AG04450 (cell line): ENCODE measurements at regions of chr6 and their contacts with region 1.

Region 1: DNA sequence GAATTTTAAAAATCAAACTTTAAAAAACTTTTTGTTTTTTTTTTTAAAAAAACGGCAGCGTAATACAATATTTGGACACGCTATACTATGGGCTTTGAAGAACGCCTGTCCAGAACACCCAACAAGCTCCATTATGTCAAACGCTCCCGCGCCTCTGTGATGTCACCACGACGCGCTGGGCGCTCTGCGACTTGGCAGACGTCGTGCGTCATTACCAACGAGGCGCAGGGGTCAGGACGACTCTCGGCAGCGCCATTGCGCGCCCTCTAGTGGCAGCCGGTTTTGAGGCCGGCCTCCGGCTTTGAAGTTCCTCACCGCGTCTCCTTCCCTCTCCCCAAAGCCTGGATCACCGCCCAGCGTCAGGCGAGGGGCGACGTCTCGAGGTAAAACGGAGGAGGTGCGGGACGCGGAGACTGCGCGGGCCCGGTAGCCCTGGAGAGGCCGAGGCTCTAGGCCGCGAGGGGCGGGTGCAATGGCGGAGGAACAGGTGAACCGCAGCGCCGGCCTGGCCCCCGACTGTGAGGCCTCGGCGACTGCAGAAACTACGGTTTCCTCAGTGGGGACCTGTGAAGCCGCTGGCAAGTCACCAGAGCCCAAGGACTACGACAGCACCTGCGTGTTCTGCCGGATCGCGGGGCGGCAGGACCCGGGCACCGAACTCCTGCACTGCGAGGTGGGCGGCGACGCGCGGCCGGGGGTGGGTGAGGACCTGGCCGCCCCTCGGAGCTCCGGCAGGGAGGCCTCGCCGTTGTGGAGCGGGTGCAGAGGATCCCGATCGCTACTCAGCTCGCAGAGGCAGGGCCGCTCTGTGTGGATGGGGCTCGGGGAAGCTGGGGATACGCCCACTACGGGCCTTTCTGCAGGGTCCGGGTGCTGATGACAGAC is at the start of gene HINT3:
- DNase-seq: peak; percentile 91
- H3K4me3 ChIP-seq: peak within 1 kb of the TSS; percentile 91
- H3K27ac ChIP-seq: peak within 1 kb of the TSS; percentile 78
- H3K27me3 ChIP-seq: no peaks in the 10 kb centered on the region
- CTCF ChIP-seq: peak; percentile 96
- polyA plus RNA-seq, gene HINT3: 4.0 and 4.5 TPM in 2 replicates

Region 2: DNA sequence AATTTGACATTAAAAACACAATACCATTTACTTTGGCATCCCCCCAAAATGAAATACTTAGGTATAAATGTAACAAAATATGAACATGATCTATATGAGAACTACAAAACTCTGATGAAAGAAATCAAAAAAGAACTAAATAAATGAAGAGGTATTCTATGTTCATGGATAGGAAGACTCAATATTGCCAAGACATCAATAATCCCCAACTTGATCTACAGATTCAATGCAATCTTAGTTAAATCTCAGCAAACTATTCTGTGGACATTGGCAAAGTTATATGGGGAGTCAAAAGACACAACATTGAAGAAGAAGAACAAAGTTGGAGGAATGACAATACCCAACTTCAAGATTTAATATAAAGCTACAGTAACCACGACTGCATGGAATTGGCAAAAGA is 352.5 kb before region 1 on chr6:
- CTCF ChIA-PET with region 1: no interaction called
- POLR2A ChIA-PET with region 1: no interaction called
- DNase-seq: no peak
- H3K4me3 ChIP-seq: no peak overlapping the region
- H3K27ac ChIP-seq: no peak overlapping the region
- H3K27me3 ChIP-seq: no peaks in the 10 kb centered on the region
- CTCF ChIP-seq: no peak

Region 3: GRCh38 chr6:125779924-125780539 is 176.7 kb before region 1 on chr6:
- CTCF ChIA-PET with region 1: interaction called, 196 read pairs
- POLR2A ChIA-PET with region 1: interaction called, 4 read pairs
- DNase-seq: peak; percentile 79
- H3K4me3 ChIP-seq: peak overlapping the region; percentile 68
- H3K27ac ChIP-seq: peak overlapping the region; percentile 88
- H3K27me3 ChIP-seq: no peaks in the 10 kb centered on the region
- CTCF ChIP-seq: peak; percentile 28; the same call in 1 of the 2 replicates

Region 4: GRCh38 chr6:125834348-125834747 is 122.4 kb before region 1 on chr6:
- CTCF ChIA-PET with region 1: interaction called, 12 read pairs
- POLR2A ChIA-PET with region 1: no interaction called
- DNase-seq: no peak
- H3K4me3 ChIP-seq: no peak overlapping the region
- H3K27ac ChIP-seq: no peak overlapping the region
- H3K27me3 ChIP-seq: no peaks in the 10 kb centered on the region
- CTCF ChIP-seq: no peak

Region 5: DNA sequence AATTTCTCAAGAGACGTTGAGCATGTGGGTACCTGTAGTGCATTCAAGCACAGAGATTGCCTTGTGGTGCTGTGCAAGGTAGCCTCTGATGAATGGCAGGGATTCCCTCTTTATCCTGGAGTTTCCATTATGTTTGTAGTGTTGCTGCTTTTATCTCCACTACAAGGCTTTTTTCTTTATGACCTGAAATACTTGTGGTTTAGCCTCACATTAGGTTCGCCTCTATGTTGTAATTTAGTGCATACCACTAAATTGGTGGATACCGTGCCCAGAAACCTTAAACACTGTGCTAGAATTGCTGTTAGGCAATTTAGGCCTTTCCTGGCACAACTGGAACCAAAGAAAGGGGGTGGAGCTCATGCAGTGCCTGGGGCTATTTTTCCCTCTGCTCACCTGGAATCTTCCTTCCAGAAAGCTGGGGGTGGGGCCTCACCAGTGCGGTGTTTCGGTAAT is 89.2 kb before region 1 on chr6:
- CTCF ChIA-PET with region 1: interaction called, 20 read pairs
- POLR2A ChIA-PET with region 1: no interaction called
- DNase-seq: peak; percentile 33
- H3K4me3 ChIP-seq: no peak overlapping the region
- H3K27ac ChIP-seq: no peak overlapping the region
- H3K27me3 ChIP-seq: no peaks in the 10 kb centered on the region
- CTCF ChIP-seq: no peak

Region 6: GRCh38 chr6:125913864-125914351 is 42.8 kb before region 1 on chr6:
- CTCF ChIA-PET with region 1: interaction called, 17 read pairs
- POLR2A ChIA-PET with region 1: no interaction called
- DNase-seq: peak; percentile 94
- H3K4me3 ChIP-seq: no peak overlapping the region
- H3K27ac ChIP-seq: no peak overlapping the region
- H3K27me3 ChIP-seq: no peaks in the 10 kb centered on the region
- CTCF ChIP-seq: no peak

Region 7: DNA sequence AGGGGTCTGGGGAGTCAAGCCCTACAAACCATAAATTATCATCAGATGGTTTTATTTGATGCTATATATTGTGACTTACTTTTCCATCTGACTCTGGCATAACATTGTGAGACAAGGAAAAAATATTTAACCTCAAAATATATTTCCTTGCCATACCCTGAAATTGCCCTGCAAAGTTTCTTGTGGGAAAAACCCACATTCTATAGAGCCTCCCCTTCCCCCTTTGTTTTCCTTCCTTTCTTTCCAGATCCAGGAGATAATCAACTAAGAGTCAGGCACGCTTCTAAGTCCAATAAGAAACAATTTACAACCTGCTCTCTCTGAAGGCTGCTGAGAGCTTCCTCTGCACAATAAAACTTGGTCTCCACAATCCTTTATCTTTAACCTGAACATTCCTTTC is 17.7 kb before region 1 on chr6:
- CTCF ChIA-PET with region 1: interaction called, 92 read pairs
- POLR2A ChIA-PET with region 1: interaction called, 3 read pairs
- DNase-seq: no peak
- H3K4me3 ChIP-seq: no peak overlapping the region
- H3K27ac ChIP-seq: no peak overlapping the region
- H3K27me3 ChIP-seq: no peaks in the 10 kb centered on the region
- CTCF ChIP-seq: no peak

Region 8: GRCh38 chr6:125974214-125974866 is 17.6 kb after region 1 on chr6:
- CTCF ChIA-PET with region 1: interaction called, 48 read pairs
- POLR2A ChIA-PET with region 1: no interaction called
- DNase-seq: no peak
- H3K4me3 ChIP-seq: no peak overlapping the region
- H3K27ac ChIP-seq: no peak overlapping the region
- H3K27me3 ChIP-seq: no peaks in the 10 kb centered on the region
- CTCF ChIP-seq: peak; percentile 55

Region 9: DNA sequence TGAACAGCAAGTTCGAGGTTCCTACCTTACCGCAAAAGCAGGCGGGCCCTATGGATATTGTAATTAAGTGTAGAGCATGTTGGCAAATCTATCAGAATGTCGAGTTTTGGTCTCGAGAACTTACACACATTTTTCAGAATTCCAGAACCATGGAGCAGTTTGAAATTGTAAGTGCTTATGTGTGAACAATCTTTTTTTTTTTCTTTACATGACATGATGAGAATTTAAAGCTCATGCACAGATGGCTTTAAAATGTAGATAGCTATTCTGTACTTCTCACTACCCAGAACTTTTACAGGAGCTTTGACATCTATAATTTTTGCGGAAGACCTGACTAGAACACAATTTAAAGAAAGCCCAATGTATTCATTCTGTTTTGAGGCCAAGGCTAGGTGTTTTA is 1043.9 kb after region 1 on chr6:
- CTCF ChIA-PET with region 1: no interaction called
- POLR2A ChIA-PET with region 1: no interaction called
- DNase-seq: no peak
- H3K4me3 ChIP-seq: no peak overlapping the region
- H3K27ac ChIP-seq: no peak overlapping the region
- H3K27me3 ChIP-seq: no peaks in the 10 kb centered on the region
- CTCF ChIP-seq: no peak